OCI-LY7 (cell line): ENCODE measurements at regions of chr10 and their contacts with region 1.

Region 1: GRCh38 chr10:13831711-13832141 is 245.0 kb downstream of the PRPF18 start:
- DNase-seq: peak; percentile 88
- H3K4me3 ChIP-seq: peak overlapping the region; percentile 49
- H3K27ac ChIP-seq: peak overlapping the region; percentile 67
- H3K4me1 ChIP-seq: peaks cover 40% of the 10 kb centered on the region
- CTCF ChIP-seq: no peak

Region 2: DNA sequence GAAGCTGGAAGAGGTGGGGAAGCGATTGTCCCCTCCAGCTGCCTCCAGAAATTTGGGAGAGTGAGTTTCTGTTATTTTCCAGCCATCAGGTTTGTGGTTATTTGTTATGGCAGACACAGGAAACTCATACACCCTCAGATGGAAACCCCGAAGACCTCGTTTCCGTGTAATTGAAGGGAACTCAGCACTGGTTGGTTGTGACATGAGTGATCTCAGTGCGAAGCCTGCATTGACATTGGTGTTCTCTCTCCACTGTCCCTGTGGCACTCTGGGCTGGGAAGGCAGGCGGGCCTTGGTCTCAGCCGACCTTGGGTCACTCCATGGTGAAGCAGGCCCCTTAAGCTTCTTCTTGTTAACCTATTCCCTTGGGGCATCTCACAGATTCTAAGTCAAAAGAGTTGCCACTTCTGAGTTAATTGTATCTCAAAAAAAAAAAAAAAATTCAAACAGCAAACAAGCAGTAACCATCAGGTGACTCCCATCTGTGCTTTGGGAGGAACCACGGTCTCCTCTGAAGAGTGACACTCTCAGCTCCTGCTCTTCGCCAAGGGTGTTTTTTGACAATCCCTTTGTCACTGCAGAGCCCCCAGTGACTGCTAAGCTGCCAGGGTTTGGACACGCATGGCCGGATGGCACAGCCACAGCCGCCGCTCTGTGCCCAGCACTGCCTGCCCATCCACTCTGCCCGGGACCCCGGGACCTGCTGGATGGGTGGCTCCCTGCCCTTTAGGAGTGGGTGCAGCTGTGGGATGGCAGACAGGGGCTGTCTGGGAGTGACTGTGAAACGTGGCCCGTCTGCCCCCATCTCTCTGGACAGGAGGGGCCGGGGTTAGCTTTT is 11.4 kb before region 1 on chr10:
- CTCF ChIA-PET with region 1: no interaction called
- POLR2A ChIA-PET with region 1: interaction called, 13 read pairs
- intact Hi-C with region 1: no loop called
- DNase-seq: peak; percentile 16
- H3K4me3 ChIP-seq: no peak overlapping the region
- H3K27ac ChIP-seq: no peak overlapping the region
- H3K4me1 ChIP-seq: peaks cover 24% of the 10 kb centered on the region
- CTCF ChIP-seq: no peak

Region 3: DNA sequence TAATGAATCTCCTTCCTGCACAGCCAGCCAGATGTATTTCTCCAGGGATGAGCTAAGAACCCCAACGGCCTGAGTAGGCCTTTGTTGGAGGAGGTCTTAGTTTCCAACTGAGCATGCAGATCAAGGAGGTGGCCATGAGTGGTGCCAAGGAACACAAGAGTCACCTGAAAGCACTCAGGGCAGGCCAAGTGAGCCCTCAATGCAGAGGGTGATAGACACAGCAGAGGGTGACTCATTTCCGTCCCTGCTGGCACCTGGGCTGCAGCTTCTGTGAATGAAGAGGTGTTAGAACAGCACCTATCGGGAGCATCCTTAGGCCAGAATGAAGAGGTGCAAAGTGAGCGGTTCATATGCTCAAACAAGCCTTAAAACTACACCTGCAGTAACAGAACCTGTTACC is 287.2 kb after region 1 on chr10:
- CTCF ChIA-PET with region 1: no interaction called
- POLR2A ChIA-PET with region 1: no interaction called
- intact Hi-C with region 1: no loop called
- DNase-seq: no peak
- H3K4me3 ChIP-seq: no peak overlapping the region
- H3K27ac ChIP-seq: no peak overlapping the region
- H3K4me1 ChIP-seq: no peaks in the 10 kb centered on the region
- CTCF ChIP-seq: no peak